ENCODE measurements at regions of chr12 and their contacts with region 1.

Region 1: GRCh38 chr12:75334384-75335030 is at the start of gene GLIPR1L1:
- DNase-seq: peak; percentile 91 to 93
- ATAC-seq: peak; percentile 92
- H3K4me3 ChIP-seq: peak within 1 kb of the TSS; percentile 6 to 61
- H3K27ac ChIP-seq: peak within 1 kb of the TSS in 1 of 2 donors; percentile 10
- H3K4me1 ChIP-seq: no peaks in the 10 kb centered on the region
- H3K27me3 ChIP-seq: no peaks in the 10 kb centered on the region
- total RNA-seq, gene GLIPR1L1: not detected

Region 2: DNA sequence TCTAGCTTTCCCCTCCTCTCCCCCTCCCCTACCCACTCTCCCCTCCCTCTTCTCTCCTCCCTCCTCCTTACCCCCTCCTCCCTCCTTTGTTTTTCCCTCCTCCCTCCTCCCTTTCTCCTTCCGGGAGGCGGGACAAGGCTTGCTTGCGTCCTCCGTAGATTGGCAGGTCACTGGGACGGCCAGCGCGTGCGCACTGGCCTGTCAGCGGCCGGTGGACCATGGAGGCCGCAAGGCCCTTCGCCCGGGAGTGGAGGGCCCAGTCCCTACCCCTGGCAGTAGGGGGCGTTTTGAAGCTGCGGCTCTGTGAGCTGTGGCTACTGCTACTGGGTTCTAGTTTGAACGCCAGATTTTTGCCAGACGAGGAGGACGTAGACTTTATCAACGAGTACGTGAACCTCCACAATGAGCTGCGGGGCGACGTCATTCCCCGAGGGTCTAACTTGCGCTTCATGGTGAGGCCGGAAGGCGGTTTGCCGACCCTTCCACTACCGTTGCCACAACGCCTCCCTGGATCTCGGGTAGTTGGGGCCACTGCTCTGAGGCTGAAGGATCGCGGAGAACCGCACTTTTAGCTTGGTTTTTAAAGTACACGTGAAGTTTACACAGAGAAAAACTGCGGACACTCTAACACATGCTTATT is 56.5 kb after region 1 on chr12 and contains the start of gene GLIPR1L2:
- intact Hi-C with region 1: loop called (anchors 2 to 10 kb)
- DNase-seq: peak; percentile 97 to 98
- ATAC-seq: peak; percentile 100
- H3K4me3 ChIP-seq: peak within 1 kb of the TSS; percentile 62 to 64
- H3K27ac ChIP-seq: peak within 1 kb of the TSS; percentile 57 to 76
- H3K4me1 ChIP-seq: no peaks in the 10 kb centered on the region
- H3K27me3 ChIP-seq: no peaks in the 10 kb centered on the region
- total RNA-seq, gene GLIPR1L2: 0.94 to 1.9 TPM

Region 3: DNA sequence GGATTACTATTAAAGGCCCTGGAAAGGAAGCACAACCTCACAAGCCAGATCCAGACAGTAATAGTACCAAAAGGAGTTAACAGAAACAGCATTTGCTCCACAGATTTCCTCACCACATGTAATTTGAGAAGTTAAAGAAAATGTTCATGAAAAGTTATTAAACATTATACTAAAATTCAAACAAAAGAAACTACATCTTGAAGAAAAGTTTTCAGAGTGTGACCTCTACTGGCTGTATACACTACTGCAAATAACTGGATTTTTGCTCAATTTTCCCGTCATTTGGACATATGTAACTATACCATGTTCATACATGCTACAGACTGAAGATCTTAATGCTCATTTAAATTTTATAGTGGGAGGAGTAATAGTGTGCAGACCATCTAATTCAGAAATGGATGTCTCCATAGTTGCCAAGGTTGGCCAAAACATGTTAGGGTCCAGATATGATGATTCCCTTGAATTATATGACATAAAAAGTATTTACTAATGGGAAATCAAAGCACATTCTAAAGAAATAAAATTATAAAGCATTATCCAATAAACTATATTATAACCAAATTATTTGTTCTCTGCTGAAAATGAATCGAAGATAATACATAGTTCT is 171.3 kb after region 1 on chr12:
- intact Hi-C with region 1: loop called (anchors 5 kb)
- DNase-seq: no peak
- ATAC-seq: no peak
- H3K4me3 ChIP-seq: no peak overlapping the region
- H3K27ac ChIP-seq: no peak overlapping the region
- H3K4me1 ChIP-seq: no peaks in the 10 kb centered on the region
- H3K27me3 ChIP-seq: no peaks in the 10 kb centered on the region

Measured in aorta (tissue), 5 donors.